Activated naive CD8-positive, alpha-beta T cell treated with anti-CD3 and anti-CD28 coated beads, Interleukin-2, amount 10 ng/mL, durations not matched to agents 7 days and 5 days (primary cell): ENCODE measurements at regions of chr19 and their contacts with region 1.

Region 1: DNA sequence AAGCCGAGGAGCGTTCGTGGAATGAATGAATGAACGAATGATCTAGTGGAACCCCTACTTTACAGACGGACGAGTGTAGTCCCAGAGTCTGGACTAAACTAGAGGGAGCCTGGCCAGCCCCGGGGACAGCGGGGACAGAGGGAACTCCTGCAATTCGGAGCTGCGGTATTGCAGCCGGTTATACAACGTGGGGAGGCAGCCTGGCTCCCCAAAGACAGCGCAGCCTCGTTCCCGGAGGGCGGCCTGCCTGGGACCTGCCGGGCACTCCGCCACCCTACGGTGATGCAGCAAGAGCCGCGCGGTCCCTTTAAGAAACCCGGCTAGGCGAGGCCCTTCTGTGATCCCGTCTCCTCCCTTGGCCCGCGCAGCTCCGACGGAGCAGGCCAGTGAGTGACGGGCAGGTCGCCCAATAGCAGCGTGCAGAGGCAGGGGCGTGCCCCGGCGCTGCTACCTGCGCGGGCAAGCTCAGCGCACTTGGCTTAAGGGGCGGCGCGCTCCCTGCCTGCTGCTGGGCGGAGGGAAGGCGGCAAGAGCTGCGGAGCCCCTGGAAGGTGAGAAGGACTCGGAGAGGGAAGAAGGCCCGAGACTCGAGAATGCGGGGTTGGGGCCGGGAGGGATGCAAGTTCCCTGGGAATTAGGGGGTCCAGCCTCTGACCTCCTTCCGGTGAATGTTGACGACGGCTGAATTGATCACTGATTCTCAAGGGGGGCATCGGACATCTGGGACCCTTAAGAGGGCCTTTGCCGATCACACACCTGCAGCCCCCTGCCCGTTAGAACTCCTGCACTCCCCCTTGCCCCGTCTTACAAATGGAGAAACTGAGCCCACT is at the start of gene ABCA7:
- DNase-seq: peak; percentile 100
- ATAC-seq: peak; percentile 88
- H3K4me3 Mint-ChIP-seq: peak within 1 kb of the TSS; percentile 99
- H3K27ac Mint-ChIP-seq: peak within 1 kb of the TSS; percentile 92
- H3K4me1 Mint-ChIP-seq: peaks cover 37% of the 10 kb centered on the region
- H3K27me3 Mint-ChIP-seq: no peaks in the 10 kb centered on the region
- total RNA-seq, gene ABCA7: 145 to 146 TPM

Region 2: DNA sequence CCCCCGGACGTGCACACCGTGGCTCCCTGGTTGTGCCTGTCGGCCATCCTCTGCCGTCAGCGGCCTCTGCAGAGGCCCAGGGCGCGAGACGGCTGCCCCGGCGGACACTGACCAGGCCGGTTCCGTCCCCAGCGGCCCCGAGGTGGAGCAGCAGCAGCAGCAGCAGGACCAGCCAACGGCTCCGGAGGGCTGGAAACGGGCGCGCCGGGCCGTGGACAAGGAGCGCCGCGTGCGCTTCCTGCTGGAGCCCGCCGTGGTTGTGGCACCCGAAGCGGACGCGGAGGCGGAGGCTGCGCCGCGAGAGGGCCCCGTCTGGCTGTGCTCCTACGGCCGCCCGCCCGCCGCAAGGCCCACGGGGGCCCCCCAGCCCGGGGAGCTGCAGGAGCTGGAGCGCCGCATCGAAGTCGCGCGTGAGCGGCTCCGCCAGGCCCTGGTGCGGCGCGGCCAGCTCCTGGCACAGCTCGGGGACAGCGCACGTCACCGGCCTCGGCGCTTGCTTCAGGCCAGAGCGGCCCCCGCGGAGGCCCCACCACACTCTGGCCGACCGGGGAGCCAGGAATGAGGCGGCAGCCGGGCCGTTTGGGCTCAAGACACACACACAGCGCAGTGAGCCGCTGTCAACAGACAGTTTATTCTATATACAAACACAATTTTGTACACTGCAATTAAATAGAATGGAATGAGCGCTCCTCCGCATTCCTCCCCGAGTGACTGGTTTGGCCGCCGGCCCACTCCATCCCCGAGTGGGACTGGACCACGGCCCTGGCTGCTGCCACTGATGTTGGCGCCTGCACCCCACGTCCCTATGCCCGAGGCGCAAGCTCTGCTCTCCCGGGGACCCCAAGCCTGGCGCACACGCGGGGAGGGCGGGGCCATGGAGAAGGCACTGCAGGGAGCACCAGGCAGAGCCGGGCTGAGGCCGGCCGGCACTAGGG is 30.6 kb before region 1 on chr19:
- POLR2A ChIA-PET with region 1: no interaction called
- DNase-seq: no peak
- ATAC-seq: no peak
- H3K4me3 Mint-ChIP-seq: no peak overlapping the region
- H3K27ac Mint-ChIP-seq: no peak overlapping the region
- H3K4me1 Mint-ChIP-seq: peaks cover 2% of the 10 kb centered on the region
- H3K27me3 Mint-ChIP-seq: no peaks in the 10 kb centered on the region

Region 3: DNA sequence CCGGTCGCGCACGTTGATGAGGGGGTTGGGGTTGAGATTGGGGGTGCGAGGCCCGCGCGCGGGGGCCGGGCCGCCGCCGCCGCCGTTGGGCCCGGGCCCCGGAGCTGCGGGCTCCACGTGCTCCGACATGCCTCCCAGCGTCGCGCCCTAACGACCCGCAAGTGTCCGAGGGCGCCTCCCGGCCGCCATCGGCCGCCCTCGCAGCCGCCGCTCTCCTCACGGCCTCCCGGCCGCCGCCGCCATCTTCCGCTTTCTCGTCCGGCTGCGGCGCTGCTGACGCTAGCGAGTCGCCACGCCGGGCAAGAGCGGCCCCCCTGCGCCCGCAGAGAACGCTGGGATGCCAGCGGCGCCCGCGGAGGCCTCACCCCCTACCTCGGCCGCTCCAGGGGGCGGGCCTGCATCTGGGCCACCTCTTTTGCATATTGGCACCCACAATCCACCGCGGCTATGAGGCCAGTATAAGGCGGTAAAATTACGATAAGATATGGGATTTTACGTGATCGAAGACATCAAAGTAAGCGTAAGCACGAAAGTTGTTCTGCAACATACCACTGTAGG is 18.9 kb before region 1 on chr19 and contains the start of gene TMEM259:
- POLR2A ChIA-PET with region 1: interaction called, 82 read pairs
- DNase-seq: peak; percentile 97
- ATAC-seq: peak; percentile 86
- H3K4me3 Mint-ChIP-seq: peak within 1 kb of the TSS; percentile 90
- H3K27ac Mint-ChIP-seq: peak within 1 kb of the TSS; percentile 99
- H3K4me1 Mint-ChIP-seq: peaks cover 20% of the 10 kb centered on the region
- H3K27me3 Mint-ChIP-seq: no peaks in the 10 kb centered on the region
- total RNA-seq, gene TMEM259: 231 to 235 TPM

Region 4: DNA sequence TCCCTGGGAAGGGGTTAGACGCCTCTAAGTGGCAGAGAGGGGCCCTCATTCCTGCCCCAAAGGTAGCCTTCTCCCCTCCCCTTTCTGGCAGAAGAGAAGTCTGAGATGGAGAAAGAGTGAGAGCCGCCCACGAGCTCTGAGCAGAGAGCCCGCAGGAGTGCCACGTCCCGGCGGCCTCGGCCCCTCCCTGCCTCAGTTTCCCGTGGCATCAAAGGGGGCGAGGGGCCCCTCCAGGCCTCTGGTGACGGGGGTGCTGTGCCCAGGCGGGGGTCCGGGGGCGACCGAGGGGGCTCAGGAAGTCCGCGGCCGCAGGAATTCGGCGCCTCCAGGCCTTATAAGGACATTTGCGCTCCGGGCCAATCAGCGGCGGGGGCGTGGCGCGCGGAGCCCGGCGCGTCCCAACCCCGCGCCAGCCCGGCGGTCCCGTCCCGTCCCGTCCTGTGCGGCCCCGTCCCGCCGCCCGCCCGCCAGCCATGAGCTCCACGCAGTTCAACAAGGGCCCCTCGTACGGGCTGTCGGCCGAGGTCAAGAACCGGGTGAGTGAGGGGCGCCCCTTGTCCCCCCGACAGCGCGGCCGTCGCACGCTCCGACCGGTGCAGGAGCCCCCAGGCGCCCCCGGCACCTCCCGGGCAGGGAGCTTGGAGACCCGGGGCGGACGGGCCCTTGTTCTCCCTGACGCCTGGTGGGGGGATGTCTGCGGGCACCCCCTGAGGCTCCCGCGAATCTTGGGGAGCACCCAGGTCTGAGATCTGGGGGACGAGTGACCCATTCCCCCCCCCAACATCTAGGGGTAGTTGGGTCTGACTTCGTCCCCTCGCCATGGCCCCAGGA is 13.5 kb before region 1 on chr19 and contains the start of gene CNN2:
- POLR2A ChIA-PET with region 1: interaction called, 82 read pairs
- DNase-seq: peak; percentile 84
- ATAC-seq: peak; percentile 59
- H3K4me3 Mint-ChIP-seq: peak within 1 kb of the TSS; percentile 96
- H3K27ac Mint-ChIP-seq: peak within 1 kb of the TSS; percentile 92
- H3K4me1 Mint-ChIP-seq: peaks cover 18% of the 10 kb centered on the region
- H3K27me3 Mint-ChIP-seq: no peaks in the 10 kb centered on the region
- total RNA-seq, gene CNN2: 340 to 353 TPM

Region 5: GRCh38 chr19:1064661-1065605 is 25.1 kb after region 1 on chr19:
- POLR2A ChIA-PET with region 1: interaction called, 80 read pairs
- DNase-seq: peak; percentile 83
- ATAC-seq: peak; percentile 39
- H3K4me3 Mint-ChIP-seq: peak overlapping the region; percentile 61
- H3K27ac Mint-ChIP-seq: peak overlapping the region; percentile 69
- H3K4me1 Mint-ChIP-seq: peaks cover 20% of the 10 kb centered on the region
- H3K27me3 Mint-ChIP-seq: no peaks in the 10 kb centered on the region

Region 6: DNA sequence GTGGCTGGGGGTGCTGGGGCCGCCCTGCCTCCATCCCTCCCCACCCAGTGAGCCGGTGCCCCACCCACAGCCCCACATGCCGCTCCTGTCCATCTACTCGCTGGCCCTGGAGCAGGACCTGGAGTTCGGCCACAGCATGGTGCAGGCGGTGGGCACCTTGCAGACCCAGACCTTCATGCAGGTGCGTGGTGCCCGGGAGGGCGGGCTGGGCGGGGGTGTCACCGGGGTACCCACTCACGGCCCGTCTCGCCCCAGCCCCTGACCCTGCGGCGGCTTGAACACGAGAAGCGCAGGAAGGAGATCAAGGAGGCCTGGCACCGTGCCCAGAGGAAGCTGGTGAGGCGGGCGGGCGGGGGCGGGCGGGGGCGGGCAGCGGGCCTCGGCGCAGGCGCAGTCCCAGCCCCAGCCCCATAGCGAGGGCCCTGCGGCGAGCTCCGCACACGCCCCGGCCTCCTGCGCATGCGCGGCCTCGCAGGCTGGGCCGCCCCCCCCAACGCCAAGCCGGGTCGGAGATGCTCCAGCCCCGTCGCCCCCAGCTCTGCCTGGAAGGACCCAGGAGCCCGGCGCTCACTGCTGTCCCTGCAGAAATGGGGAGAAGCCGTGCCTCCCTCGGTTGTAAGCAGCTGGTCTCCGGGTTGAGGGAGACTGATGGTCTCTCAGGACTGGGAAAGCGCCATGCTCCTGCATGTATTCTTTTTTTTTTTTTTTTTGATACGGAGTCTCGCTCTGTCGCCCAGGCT is 34.9 kb after region 1 on chr19:
- POLR2A ChIA-PET with region 1: interaction called, 21 read pairs
- DNase-seq: peak; percentile 91
- ATAC-seq: peak; percentile 32
- H3K4me3 Mint-ChIP-seq: peak overlapping the region; percentile 72
- H3K27ac Mint-ChIP-seq: peak overlapping the region; percentile 87
- H3K4me1 Mint-ChIP-seq: peaks cover 39% of the 10 kb centered on the region
- H3K27me3 Mint-ChIP-seq: no peaks in the 10 kb centered on the region

Region 7: GRCh38 chr19:1082172-1082927 is 42.5 kb after region 1 on chr19:
- POLR2A ChIA-PET with region 1: interaction called, 43 read pairs
- DNase-seq: peak; percentile 89
- ATAC-seq: peak; percentile 60
- H3K4me3 Mint-ChIP-seq: peak overlapping the region; percentile 45
- H3K27ac Mint-ChIP-seq: peak overlapping the region; percentile 72
- H3K4me1 Mint-ChIP-seq: peaks cover 21% of the 10 kb centered on the region
- H3K27me3 Mint-ChIP-seq: no peaks in the 10 kb centered on the region

Region 8: GRCh38 chr19:1087813-1088415 is 48.1 kb after region 1 on chr19:
- POLR2A ChIA-PET with region 1: interaction called, 43 read pairs
- DNase-seq: peak; percentile 71
- ATAC-seq: peak; percentile 32
- H3K4me3 Mint-ChIP-seq: peak overlapping the region; percentile 76
- H3K27ac Mint-ChIP-seq: peak overlapping the region; percentile 95
- H3K4me1 Mint-ChIP-seq: peaks cover 34% of the 10 kb centered on the region
- H3K27me3 Mint-ChIP-seq: no peaks in the 10 kb centered on the region